Body of pancreas (tissue), 4 donors: ENCODE measurements at regions of chr9 and their contacts with region 1.

Region 1: DNA sequence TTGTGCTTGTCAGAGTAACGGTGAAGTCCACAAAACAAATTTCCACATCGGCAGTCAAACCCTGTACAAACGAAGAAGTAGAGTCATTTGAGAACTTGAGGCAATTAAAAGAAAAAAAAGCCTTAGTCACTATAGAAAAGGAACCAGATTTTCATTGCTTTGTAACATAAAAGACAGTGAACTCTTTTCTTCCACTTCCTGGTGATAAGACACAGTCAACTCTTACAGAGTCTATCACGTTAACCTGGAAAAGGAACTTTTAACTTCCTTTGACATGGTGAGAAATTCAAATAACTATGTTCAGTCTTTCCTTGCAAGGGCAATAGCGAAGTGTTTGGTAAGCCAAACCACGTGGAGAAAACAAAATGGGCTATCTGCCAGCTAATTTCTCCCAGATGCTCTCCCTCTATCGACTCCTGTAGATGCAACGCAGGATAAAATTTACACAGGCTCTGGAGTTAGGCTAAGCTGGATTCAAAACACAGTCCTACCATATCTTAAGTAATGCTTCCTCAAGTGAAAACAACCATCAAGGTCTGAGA is 8.9 kb downstream of the ZFAND5 start:
- DNase-seq: no peak
- ATAC-seq: no peak
- H3K4me3 ChIP-seq: no peak overlapping the region
- H3K27ac ChIP-seq: peak overlapping the region in 1 of 4 donors; percentile 32
- H3K4me1 ChIP-seq: peaks cover 51% of the 10 kb centered on the region
- H3K27me3 ChIP-seq: no peaks in the 10 kb centered on the region
- CTCF ChIP-seq: no peak
- POLR2A ChIP-seq: no peak

Region 2: DNA sequence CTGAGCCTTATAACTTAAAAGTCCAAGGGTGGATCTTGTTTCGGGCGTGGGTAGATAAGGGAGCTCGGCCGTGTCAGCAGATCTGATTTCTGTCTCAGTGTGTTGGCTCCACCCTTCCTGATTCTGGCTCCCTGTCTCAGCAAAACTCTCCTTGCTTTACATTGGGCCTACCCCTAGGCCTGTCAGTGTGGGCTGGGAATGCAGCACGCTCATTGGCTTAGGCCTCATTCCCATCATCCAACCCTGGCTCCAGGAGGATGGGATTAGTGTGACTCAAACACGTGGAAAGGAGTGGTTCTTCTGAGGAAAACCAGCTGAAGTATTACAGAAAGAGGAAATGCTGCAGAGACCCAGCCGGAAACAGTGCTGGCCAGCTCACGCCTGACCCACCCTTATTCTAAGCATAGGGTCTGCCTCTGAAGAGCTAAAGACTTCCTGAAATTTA is 51.0 kb before region 1 on chr9:
- intact Hi-C with region 1: loop called (anchors 10 kb)
- DNase-seq: peak; percentile 24 to 85 (median 62)
- ATAC-seq: peak; percentile 74
- H3K4me3 ChIP-seq: no peak overlapping the region
- H3K27ac ChIP-seq: peak overlapping the region in 2 of 4 donors; percentile 51 to 71
- H3K4me1 ChIP-seq: no peaks in the 10 kb centered on the region
- H3K27me3 ChIP-seq: no peaks in the 10 kb centered on the region
- CTCF ChIP-seq: no peak
- POLR2A ChIP-seq: peak in 2 of 3 donors; percentile 19 to 67

Region 3: GRCh38 chr9:72533337-72533736 is 177.2 kb after region 1 on chr9:
- intact Hi-C with region 1: no loop called
- DNase-seq: no peak
- ATAC-seq: no peak
- H3K4me3 ChIP-seq: no peak overlapping the region
- H3K27ac ChIP-seq: no peak overlapping the region
- H3K4me1 ChIP-seq: peaks cover 3% of the 10 kb centered on the region
- H3K27me3 ChIP-seq: no peaks in the 10 kb centered on the region
- CTCF ChIP-seq: no peak
- POLR2A ChIP-seq: no peak

Region 4: DNA sequence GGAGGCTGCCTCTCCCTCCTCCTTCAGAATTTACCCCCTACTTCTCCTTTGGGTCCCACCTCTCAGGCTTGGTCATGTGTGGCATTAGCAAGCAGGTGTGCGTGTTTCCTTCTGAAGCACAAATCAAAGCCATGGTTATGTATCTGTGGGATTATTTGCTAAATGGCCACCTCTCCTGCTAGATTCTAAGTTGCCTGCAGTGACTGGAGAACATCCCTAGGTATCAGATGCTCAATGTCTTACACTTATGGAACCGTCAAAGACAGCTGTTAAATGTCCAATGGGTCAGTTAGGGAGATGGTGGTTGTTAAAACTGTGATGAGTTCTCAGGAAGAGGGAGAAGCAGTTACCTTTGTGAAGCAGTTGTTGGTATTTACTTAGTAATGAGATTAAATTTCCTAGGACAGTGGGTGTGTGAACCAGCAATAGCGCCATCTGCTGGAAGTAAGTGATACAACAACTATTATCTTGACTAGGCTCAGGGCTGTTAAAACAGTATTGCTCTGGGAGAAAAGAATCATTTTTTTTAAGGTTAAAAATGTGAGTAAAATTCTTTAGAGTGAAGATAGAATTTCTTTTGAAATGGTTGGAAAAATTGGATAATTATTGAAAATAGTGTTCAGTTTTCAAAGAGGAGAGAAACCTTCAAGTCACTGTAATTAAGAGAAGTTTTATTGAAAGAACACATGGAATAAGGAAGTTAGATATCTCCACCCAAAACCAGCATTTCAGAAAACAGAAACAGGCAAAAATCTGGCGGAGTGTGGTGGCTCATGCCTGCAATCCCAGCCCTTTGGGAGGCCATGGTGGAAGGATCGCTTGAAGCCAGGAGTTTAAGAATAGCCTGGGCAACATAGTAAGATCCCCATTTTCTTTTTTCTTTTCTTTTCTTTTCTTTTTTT is 236.6 kb after region 1 on chr9:
- intact Hi-C with region 1: loop called (anchors 10 kb)
- DNase-seq: peak; percentile 26 to 65 (median 48)
- ATAC-seq: peak; percentile 92
- H3K4me3 ChIP-seq: no peak overlapping the region
- H3K27ac ChIP-seq: no peak overlapping the region
- H3K4me1 ChIP-seq: no peaks in the 10 kb centered on the region
- H3K27me3 ChIP-seq: no peaks in the 10 kb centered on the region
- CTCF ChIP-seq: peak; percentile 72 to 94 (median 91)
- POLR2A ChIP-seq: peak in 1 of 3 donors; percentile 8

Region 5: GRCh38 chr9:72703574-72703973 is 347.5 kb after region 1 on chr9:
- intact Hi-C with region 1: no loop called
- DNase-seq: no peak
- ATAC-seq: no peak
- H3K4me3 ChIP-seq: no peak overlapping the region
- H3K27ac ChIP-seq: no peak overlapping the region
- H3K4me1 ChIP-seq: no peaks in the 10 kb centered on the region
- H3K27me3 ChIP-seq: no peaks in the 10 kb centered on the region
- CTCF ChIP-seq: no peak
- POLR2A ChIP-seq: no peak